HCT116 (cell line): ENCODE measurements at regions of chr9 and their contacts with region 1.

Region 1: DNA sequence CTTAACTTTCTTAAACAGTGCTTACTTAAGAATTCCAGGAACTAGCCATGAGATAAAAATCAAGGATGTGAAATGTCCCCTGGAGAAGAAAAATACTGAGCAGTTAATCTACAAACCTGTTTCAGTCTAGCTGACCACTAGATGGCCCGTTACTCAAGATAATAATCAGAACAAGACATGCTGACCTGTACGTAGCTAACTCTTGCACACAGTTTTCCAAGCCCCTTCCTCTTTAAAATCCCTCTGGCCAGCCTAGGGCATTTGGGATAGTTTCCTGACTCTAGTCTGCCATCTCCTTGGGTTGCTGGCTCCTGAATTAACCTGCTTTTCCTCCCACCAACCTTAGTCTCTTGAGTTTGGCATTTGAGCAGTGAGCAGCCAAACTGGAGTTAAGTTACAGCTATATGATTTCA is 59.2 kb upstream of the TRAF1 start:
- DNase-seq: peak; percentile 50
- ATAC-seq: peak; percentile 78
- H3K4me3 ChIP-seq: no peak overlapping the region
- H3K27ac ChIP-seq: no peak overlapping the region
- H3K4me1 ChIP-seq: no peaks in the 10 kb centered on the region
- H3K27me3 ChIP-seq: no peaks in the 10 kb centered on the region
- CTCF ChIP-seq: peak; percentile 62 to 72 (median 69)
- POLR2A ChIP-seq: no peak
- RAD21 ChIP-seq: peak; percentile 83

Region 2: DNA sequence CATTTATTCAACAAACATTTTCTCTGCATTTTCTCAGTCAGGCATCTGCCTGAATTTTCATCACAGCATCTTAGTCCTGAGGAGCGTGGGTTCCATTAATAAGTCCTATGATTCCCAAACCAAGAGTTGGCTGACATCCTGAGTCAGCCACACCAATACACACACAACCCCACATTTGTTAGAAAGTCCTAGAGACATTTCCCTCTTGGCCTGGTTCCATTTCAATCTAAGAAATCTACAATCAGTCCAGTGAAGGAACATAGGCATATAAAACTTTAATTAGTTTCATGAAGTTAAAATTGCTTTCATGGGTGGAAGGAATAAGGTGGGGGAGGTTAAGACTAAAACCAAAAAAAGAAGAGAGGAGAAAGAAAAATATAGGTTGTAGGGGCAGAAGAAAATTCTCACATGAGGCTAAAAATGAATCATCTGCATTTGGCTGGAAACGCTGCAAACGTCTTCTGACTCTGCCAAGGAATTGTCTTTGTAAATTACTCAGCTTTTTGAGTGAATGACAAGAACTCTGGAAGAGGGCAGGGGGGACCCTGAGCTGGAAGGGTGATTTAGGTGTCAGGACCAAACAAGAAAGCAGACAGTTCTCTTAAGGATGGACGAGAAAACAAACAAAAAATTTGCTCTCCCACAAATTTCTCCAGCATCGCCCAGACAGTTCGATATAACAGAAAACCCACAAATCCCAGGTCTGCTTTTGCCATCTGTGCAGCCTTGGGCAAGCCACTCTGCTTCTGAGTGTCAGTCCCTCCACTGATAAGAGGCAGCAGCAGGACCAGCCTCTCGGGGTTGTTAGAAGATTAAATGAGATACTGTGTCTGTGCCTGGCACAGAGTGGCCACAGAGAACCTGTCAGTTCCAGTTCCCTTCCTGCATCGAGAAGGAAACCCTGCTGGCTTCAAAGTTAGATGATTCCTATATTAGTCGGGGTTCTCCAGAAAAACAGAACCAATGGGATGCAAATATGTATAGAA is 695.5 kb before region 1 on chr9:
- CTCF ChIA-PET with region 1: no interaction called
- POLR2A ChIA-PET with region 1: no interaction called
- RAD21 ChIA-PET with region 1: no interaction called
- intact Hi-C with region 1: no loop called
- DNase-seq: no peak
- ATAC-seq: no peak
- H3K4me3 ChIP-seq: no peak overlapping the region
- H3K27ac ChIP-seq: no peak overlapping the region
- H3K4me1 ChIP-seq: no peaks in the 10 kb centered on the region
- H3K27me3 ChIP-seq: peaks cover 12% of the 10 kb centered on the region
- CTCF ChIP-seq: no peak
- POLR2A ChIP-seq: no peak
- RAD21 ChIP-seq: no peak

Region 3: DNA sequence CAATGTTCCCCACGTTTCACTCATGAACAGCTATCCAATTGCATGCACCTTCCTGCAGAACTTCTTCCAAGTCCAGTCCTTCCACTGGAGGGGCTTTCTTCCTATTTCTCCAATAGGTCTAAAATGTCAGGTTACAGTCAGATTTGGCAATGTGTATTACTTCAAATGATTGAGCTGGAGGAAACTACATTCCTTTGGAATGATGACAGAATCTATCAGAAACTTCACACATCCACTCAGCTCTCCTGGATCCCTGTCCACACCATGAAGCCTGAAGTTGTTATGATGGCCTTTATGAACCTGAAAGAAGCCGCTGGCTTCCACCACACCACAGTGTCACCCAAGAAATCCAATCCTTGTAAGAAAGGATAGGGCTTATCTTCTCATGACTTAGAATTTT is 224.8 kb before region 1 on chr9:
- CTCF ChIA-PET with region 1: interaction called, 19 read pairs
- POLR2A ChIA-PET with region 1: no interaction called
- RAD21 ChIA-PET with region 1: no interaction called
- intact Hi-C with region 1: loop called (anchors 2 kb)
- DNase-seq: no peak
- ATAC-seq: no peak
- H3K4me3 ChIP-seq: no peak overlapping the region
- H3K27ac ChIP-seq: no peak overlapping the region
- H3K4me1 ChIP-seq: no peaks in the 10 kb centered on the region
- H3K27me3 ChIP-seq: no peaks in the 10 kb centered on the region
- CTCF ChIP-seq: no peak
- POLR2A ChIP-seq: no peak
- RAD21 ChIP-seq: no peak

Region 4: GRCh38 chr9:121023064-121023463 is 37.2 kb after region 1 on chr9:
- CTCF ChIA-PET with region 1: no interaction called
- POLR2A ChIA-PET with region 1: no interaction called
- RAD21 ChIA-PET with region 1: no interaction called
- intact Hi-C with region 1: no loop called
- DNase-seq: peak; percentile 41
- ATAC-seq: peak; percentile 70
- H3K4me3 ChIP-seq: no peak overlapping the region
- H3K27ac ChIP-seq: no peak overlapping the region
- H3K4me1 ChIP-seq: peaks cover 0 to 4% of the 10 kb centered on the region in 2 experiments; a peak in 1 of 4 replicates
- H3K27me3 ChIP-seq: no peaks in the 10 kb centered on the region
- CTCF ChIP-seq: peak; percentile 33 to 50 (median 49); a peak in 5 of 6 replicates
- POLR2A ChIP-seq: no peak
- RAD21 ChIP-seq: peak; percentile 55

Region 5: GRCh38 chr9:121059998-121060636 is 74.3 kb after region 1 on chr9:
- CTCF ChIA-PET with region 1: interaction called, 65 read pairs
- POLR2A ChIA-PET with region 1: no interaction called
- RAD21 ChIA-PET with region 1: interaction called, 7 to 8 read pairs
- intact Hi-C with region 1: loop called (anchors 1 kb)
- DNase-seq: peak; percentile 64
- ATAC-seq: peak; percentile 62
- H3K4me3 ChIP-seq: no peak overlapping the region
- H3K27ac ChIP-seq: no peak overlapping the region
- H3K4me1 ChIP-seq: peaks cover 0 to 3% of the 10 kb centered on the region in 2 experiments; a peak in 1 of 4 replicates
- H3K27me3 ChIP-seq: no peaks in the 10 kb centered on the region
- CTCF ChIP-seq: peak; percentile 65 to 84 (median 74); a peak in 5 of 6 replicates
- POLR2A ChIP-seq: no peak
- RAD21 ChIP-seq: peak; percentile 71

Region 6: GRCh38 chr9:121169094-121169601 is 183.3 kb after region 1 on chr9:
- CTCF ChIA-PET with region 1: interaction called, 5 read pairs
- POLR2A ChIA-PET with region 1: no interaction called
- RAD21 ChIA-PET with region 1: no interaction called
- intact Hi-C with region 1: loop called (anchors 10 kb)
- DNase-seq: no peak
- ATAC-seq: peak; percentile 86
- H3K4me3 ChIP-seq: no peak overlapping the region
- H3K27ac ChIP-seq: no peak overlapping the region
- H3K4me1 ChIP-seq: no peaks in the 10 kb centered on the region
- H3K27me3 ChIP-seq: no peaks in the 10 kb centered on the region
- CTCF ChIP-seq: peak in 2 of 3 experiments; percentile 62 to 64; a peak in 4 of 6 replicates
- POLR2A ChIP-seq: no peak
- RAD21 ChIP-seq: peak; percentile 20; the same call in 1 of the 2 replicates

Region 7: GRCh38 chr9:121399883-121400607 is 414.2 kb after region 1 on chr9:
- CTCF ChIA-PET with region 1: interaction called, 14 read pairs
- POLR2A ChIA-PET with region 1: no interaction called
- RAD21 ChIA-PET with region 1: no interaction called
- intact Hi-C with region 1: loop called (anchors 2 kb)
- DNase-seq: peak; percentile 74
- ATAC-seq: peak; percentile 84
- H3K4me3 ChIP-seq: no peak overlapping the region
- H3K27ac ChIP-seq: no peak overlapping the region
- H3K4me1 ChIP-seq: peaks cover 0 to 3% of the 10 kb centered on the region in 2 experiments; a peak in 1 of 4 replicates
- H3K27me3 ChIP-seq: no peaks in the 10 kb centered on the region
- CTCF ChIP-seq: peak; percentile 41 to 93 (median 73)
- POLR2A ChIP-seq: no peak
- RAD21 ChIP-seq: peak; percentile 91